HepG2 (cell line): ENCODE measurements at regions of chr6 and their contacts with region 1.

Region 1: DNA sequence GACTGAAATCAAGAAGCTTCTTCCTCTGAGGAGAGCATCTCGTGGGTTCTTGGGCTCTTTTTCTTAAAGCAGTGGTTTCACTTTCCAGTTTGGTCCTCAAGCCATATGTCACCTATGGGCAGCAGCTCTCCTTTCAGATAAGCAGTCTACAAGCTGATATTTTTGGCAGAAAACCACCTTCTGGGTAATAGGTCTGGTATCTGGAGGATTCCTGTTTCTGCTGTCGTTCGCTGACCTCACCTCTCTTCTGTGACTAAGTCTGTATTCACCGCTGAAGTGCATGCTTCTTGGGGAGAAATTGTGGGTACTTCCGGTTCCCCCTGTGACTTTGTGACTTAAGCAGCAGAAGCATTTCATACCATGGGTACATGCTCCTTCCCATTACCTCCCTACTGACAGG is 193.6 kb downstream of the EDN1 start:
- DNase-seq: no peak
- ATAC-seq: no peak
- H3K4me3 ChIP-seq: no peak overlapping the region
- H3K27ac ChIP-seq: no peak overlapping the region
- H3K4me1 ChIP-seq: peaks cover 17% of the 10 kb centered on the region
- H3K27me3 ChIP-seq: 0 out of 5 replicates have a peak, but pooled peaks cover 0 to 4% of the 10 kb centered on the region in 2 experiments
- CTCF ChIP-seq: no peak
- EP300 ChIP-seq: no peak
- POLR2A ChIP-seq: no peak
- RAD21 ChIP-seq: no peak

Region 2: GRCh38 chr6:12301009-12301408 is 182.7 kb before region 1 on chr6:
- CTCF ChIA-PET with region 1: no interaction called
- POLR2A ChIA-PET with region 1: no interaction called
- in situ Hi-C with region 1: loop called (anchors 5 kb)
- intact Hi-C with region 1: no loop called
- DNase-seq: no peak
- ATAC-seq: peak; percentile 38; the same call in 2 of the 3 replicates
- H3K4me3 ChIP-seq: no peak overlapping the region
- H3K27ac ChIP-seq: no peak overlapping the region
- H3K4me1 ChIP-seq: peaks cover 21% of the 10 kb centered on the region
- H3K27me3 ChIP-seq: no peaks in the 10 kb centered on the region
- CTCF ChIP-seq: no peak
- EP300 ChIP-seq: no peak
- POLR2A ChIP-seq: no peak
- RAD21 ChIP-seq: no peak